Spleen (tissue), 13 donors: ENCODE measurements at regions of chr2 and their contacts with region 1.

Region 1: GRCh38 chr2:126776692-126777619 is 121.0 kb downstream of the GYPC start:
- DNase-seq: peak; percentile 95
- H3K4me3 ChIP-seq: peak overlapping the region; percentile 34 to 80 (median 52)
- H3K27ac ChIP-seq: peak overlapping the region in 7 of 8 donors; percentile 3 to 80 (median 68)
- H3K4me1 ChIP-seq: peaks cover 0 to 20% (median 6%) of the 10 kb centered on the region in 6 donors
- H3K27me3 ChIP-seq: peaks cover 0 to 31% (median 0%) of the 10 kb centered on the region in 7 donors
- CTCF ChIP-seq: peak; percentile 85 to 97 (median 92)
- POLR2A ChIP-seq: no peak

Region 2: GRCh38 chr2:125745514-125745913 is 1031.4 kb before region 1 on chr2:
- intact Hi-C with region 1: loop called (anchors 10 kb)
- DNase-seq: no peak
- H3K4me3 ChIP-seq: no peak overlapping the region
- H3K27ac ChIP-seq: no peak overlapping the region
- H3K4me1 ChIP-seq: no peaks in the 10 kb centered on the region
- H3K27me3 ChIP-seq: no peaks in the 10 kb centered on the region
- CTCF ChIP-seq: peak in 8 of 11 experiments; percentile 21 to 63 (median 52)
- POLR2A ChIP-seq: no peak

Region 3: GRCh38 chr2:126527836-126528507 is 249.0 kb before region 1 on chr2:
- intact Hi-C with region 1: loop called (anchors 2 kb)
- DNase-seq: peak; percentile 77
- H3K4me3 ChIP-seq: no peak overlapping the region
- H3K27ac ChIP-seq: no peak overlapping the region
- H3K4me1 ChIP-seq: no peaks in the 10 kb centered on the region
- H3K27me3 ChIP-seq: no peaks in the 10 kb centered on the region
- CTCF ChIP-seq: peak; percentile 18 to 80 (median 69)
- POLR2A ChIP-seq: no peak

Region 4: DNA sequence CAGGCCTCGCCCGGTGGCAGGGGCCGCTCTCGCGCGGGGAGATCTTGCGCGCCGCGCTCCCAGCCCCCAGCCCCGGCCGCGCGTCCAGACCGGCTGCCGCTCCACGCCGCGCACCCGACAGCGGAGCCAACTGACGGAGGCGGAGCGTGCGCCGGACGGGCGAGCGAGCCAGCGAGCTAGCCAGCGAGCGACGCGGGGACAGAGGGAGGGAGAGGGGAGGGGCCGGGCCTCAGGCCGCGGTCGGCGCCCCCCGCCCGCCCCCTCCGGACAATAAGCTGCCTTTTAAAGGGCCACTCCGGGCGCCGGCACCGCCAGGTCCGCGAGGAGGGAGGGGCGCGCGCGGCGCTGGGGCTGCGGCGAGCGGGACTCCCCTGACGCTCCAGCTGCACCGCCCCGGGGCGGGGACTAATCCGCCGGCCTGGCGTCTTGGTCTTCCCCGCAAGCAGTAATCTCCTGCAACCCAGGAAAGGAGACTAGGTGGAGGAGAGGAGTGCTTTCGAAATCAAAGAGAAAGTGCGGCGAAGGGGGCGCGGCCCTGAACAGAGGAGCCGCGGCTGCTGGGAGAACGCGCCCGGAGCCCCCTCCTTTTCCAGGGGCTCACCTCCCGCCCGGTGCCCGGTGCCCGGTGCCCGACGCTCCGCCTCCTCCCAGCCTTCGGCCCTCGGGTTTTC is 330.1 kb after region 1 on chr2 and contains the start of gene BIN1:
- intact Hi-C with region 1: no loop called
- DNase-seq: peak; percentile 94
- H3K4me3 ChIP-seq: peak within 1 kb of the TSS; percentile 71 to 96 (median 88)
- H3K27ac ChIP-seq: peak within 1 kb of the TSS; percentile 54 to 87 (median 84)
- H3K4me1 ChIP-seq: peaks cover 10 to 74% (median 54%) of the 10 kb centered on the region in 6 donors
- H3K27me3 ChIP-seq: peaks cover 0 to 24% (median 12%) of the 10 kb centered on the region in 7 donors
- CTCF ChIP-seq: no peak
- POLR2A ChIP-seq: peak in 1 of 3 donors; percentile 42
- total RNA-seq, gene BIN1: 60.0 to 123 (median 68.8) TPM